ENCODE measurements at regions of chr17 and their contacts with region 1.

Region 1: DNA sequence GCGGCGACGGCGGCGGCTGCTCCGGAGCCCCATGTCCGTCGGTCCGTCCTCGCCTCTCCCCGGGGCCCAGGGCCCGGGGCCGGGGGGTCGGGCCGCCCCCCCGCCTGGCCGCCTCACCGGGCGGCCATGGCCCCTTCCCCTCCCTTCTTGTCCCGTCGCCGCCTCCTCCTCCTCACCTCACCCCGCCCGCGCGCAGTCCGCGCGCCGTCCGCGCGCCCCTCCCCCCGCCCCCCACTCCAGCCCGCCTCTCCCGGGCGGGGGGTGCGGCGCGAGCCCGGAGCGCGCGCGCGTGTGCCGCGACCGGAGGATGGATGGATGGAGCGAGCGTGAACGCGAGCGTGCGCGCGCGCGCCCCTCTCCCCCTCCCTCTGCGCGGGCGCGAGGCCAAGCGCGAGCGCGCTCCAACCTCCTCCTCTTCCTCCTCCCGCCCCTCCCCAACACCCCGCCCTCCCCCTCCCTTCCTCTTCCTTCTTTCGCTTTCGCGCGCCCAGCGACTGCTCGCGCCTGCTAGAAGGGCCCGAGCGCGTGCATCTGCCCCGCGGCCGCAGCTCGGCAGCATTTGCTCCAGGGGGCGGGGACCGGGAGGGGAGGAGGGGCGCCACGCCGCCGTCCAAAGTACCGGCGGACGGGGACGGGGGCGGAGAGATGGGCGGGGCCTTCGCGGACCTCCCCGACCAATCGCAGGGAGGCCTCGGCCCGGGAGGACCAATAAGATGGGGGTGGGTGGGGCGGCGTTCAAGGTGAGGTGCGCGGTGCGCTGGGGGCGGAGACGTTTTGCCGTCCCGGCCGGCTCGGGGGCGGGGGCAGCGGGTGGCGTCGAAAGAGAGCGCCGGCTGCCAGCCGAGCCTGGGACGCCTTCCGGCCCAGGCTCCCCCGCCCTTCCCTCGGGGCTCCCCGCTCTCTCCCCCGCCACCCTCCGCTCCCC is at the start of gene ATXN7L3:
- DNase-seq: peak; percentile 99
- H3K4me3 Mint-ChIP-seq: peak within 1 kb of the TSS; percentile 91
- H3K27ac Mint-ChIP-seq: peak within 1 kb of the TSS; percentile 96
- H3K4me1 Mint-ChIP-seq: peaks cover 43% of the 10 kb centered on the region
- H3K27me3 Mint-ChIP-seq: no peaks in the 10 kb centered on the region
- total RNA-seq, gene ATXN7L3: 105 and 118 TPM in 2 replicates

Region 2: DNA sequence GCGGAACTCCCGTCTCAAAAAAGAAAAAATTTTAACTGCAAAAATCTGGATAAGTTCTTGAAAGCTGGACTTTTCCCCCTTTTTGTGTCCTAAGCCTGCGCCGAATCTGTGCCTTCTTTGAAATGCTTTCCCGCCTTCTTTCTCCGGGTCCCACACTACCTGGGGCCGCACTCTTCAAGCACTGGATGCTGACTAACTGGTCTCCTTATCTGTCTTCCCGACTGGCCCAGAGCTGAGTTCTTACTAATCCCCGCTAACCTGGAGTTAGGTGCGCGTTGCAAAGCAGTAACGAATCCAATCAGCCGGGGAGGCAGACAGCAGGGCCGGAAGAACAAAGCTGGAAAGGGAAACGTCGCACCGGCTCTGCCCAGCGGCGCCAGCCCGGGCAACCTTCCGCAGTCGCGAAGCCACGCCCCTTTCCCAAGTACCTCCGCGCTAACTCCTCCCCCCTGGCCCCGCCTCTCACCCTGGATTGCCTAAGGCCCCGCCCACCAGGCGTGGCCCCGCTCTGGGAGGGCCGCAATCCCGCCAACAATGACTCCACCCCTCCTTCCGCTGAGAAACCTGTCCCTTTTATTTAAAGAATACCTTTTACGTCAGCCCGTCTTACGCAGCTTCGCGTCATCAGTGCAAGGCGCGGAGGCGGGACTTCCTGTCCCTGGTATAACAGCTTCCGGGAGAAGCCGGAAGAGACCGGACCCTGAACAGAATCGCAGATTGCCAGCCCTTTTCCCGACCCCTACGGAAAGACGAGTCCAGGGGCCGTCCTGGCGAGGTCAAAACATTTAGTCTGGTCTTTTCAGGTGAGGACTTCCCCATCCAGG is 13.3 kb before region 1 on chr17 and contains the start of gene TMUB2:
- intact Hi-C with region 1: loop called (anchors 1 kb)
- DNase-seq: peak; percentile 100
- H3K4me3 Mint-ChIP-seq: peak within 1 kb of the TSS; percentile 100
- H3K27ac Mint-ChIP-seq: peak within 1 kb of the TSS; percentile 99
- H3K4me1 Mint-ChIP-seq: peaks cover 33% of the 10 kb centered on the region
- H3K27me3 Mint-ChIP-seq: no peaks in the 10 kb centered on the region
- total RNA-seq, gene TMUB2: 16.1 and 19.0 TPM in 2 replicates

Region 3: DNA sequence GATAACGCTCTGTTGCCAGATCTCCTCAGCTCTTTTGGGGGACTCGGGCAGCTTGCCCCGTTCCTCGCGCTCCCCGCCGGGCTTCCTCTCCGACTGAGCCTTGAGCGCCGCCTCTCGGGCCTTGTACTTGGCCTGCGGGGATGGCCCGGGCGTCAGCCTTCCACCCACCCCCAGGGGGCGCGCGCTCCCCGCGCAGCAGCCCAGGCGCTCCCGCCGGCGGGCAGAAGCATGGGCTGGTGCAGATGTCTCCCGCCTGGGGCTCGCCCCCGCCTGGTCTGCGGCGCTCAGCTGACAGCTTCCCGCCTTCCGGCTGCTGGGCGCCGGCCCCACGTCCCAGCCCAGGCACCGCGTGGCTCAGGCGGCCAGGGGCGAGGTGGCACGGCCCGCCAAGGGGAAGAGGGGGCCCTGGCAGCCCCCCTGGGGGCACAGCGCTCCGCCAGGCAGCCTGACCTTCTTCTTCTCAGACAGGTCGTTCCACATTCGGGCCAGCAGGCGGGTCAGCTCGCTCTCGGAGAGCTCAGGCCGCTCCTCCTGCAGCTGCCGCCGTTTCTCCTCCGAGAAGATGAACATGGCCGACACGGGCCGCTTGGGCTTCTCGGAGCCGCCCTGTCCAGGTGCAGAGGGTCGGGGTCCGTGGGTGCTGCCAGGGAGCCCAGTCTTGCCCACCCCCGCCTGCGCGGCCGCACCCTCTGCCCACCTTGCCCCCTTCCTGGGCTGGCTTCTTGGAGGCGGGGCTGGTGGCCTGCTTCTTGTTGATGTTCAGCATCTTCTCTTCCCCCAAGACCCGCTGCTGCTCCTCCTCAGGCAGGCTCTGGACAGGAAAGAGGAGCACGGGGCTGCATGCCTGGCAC is 10.8 kb after region 1 on chr17:
- intact Hi-C with region 1: loop called (anchors 1 kb)
- DNase-seq: peak; percentile 97
- H3K4me3 Mint-ChIP-seq: peak overlapping the region; percentile 85
- H3K27ac Mint-ChIP-seq: peak overlapping the region; percentile 87
- H3K4me1 Mint-ChIP-seq: peaks cover 42% of the 10 kb centered on the region
- H3K27me3 Mint-ChIP-seq: no peaks in the 10 kb centered on the region

Region 4: GRCh38 chr17:44218344-44219107 is 18.7 kb after region 1 on chr17:
- intact Hi-C with region 1: loop called (anchors 1 kb)
- DNase-seq: peak; percentile 96
- H3K4me3 Mint-ChIP-seq: peak overlapping the region; percentile 97
- H3K27ac Mint-ChIP-seq: peak overlapping the region; percentile 97
- H3K4me1 Mint-ChIP-seq: peaks cover 52% of the 10 kb centered on the region
- H3K27me3 Mint-ChIP-seq: peaks cover 2% of the 10 kb centered on the region

Region 5: GRCh38 chr17:44324571-44325275 is 124.9 kb after region 1 on chr17 and contains the start of gene SLC25A39:
- intact Hi-C with region 1: loop called (anchors 1 kb)
- DNase-seq: peak; percentile 99
- H3K4me3 Mint-ChIP-seq: peak within 1 kb of the TSS; percentile 94
- H3K27ac Mint-ChIP-seq: peak within 1 kb of the TSS; percentile 96
- H3K4me1 Mint-ChIP-seq: peaks cover 20% of the 10 kb centered on the region
- H3K27me3 Mint-ChIP-seq: no peaks in the 10 kb centered on the region
- total RNA-seq, gene SLC25A39: 172 TPM in 2 replicates

Region 6: DNA sequence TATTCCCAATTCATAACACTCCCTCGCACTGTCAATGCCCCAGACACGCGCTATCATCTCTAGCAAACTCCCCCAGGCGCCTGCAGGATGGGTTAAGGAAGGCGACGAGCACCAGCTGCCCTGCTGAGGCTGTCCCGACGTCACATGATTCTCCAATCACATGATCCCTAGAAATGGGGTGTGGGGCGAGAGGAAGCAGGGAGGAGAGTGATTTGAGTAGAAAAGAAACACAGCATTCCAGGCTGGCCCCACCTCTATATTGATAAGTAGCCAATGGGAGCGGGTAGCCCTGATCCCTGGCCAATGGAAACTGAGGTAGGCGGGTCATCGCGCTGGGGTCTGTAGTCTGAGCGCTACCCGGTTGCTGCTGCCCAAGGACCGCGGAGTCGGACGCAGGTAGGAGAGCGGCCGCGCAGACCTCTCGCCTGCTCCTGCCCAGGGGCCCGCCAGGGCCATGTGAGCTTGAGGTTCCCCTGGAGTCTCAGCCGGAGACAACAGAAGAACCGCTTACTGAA is 145.2 kb after region 1 on chr17 and contains the start of gene GRN:
- intact Hi-C with region 1: loop called (anchors 1 kb)
- DNase-seq: peak; percentile 96
- H3K4me3 Mint-ChIP-seq: peak within 1 kb of the TSS; percentile 92
- H3K27ac Mint-ChIP-seq: peak within 1 kb of the TSS; percentile 86
- H3K4me1 Mint-ChIP-seq: peaks cover 19% of the 10 kb centered on the region
- H3K27me3 Mint-ChIP-seq: peaks cover 13% of the 10 kb centered on the region
- total RNA-seq, gene GRN: 33.0 and 34.6 TPM in 2 replicates